Sigmoid colon (tissue), 7 donors: ENCODE measurements at regions of chr11 and their contacts with region 1.

Region 1: DNA sequence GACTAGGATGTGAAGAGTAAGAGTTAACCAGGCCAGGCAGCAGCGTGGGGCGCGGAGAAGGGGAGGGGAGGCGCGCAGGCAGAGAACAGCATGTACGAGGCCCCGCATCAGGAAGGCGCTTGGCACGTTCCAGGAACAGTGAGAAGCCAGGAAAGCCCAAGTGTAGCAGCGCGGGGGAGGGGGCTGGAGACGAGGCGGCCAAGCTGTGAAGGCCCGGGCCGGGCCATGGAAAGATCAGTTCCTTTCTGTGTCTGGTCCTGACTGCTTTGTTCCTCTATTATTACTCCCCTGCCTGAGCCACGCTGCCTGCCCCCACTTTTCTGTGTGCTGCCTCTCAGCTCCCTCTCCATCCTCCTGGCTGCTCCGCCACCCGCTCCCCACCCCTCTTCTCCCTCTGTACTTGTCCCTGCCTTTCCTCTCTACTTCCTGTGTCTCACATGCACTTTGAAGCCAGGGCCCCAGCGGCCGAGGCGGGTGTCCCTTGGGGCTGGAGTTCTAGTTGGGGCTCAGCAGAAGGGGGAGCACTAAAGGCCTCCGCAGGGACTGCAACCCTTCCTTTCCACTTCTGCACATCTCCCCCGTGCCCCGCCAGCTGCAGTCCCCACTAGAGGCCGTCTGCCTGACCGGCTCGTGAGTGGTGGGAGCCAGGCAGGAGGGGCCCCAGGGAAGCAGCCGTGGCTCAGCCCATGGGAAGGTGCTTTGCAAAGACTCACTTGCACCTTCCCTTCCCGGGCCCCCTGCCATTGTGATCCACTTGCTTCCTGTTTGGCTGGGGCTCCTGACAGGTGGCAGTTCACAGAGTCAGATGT is 63.7 kb downstream of the PRDM11 start:
- DNase-seq: peak; percentile 98
- H3K4me3 ChIP-seq: peak overlapping the region in 3 of 4 donors; percentile 7 to 29 (median 18)
- H3K27ac ChIP-seq: peak overlapping the region; percentile 87 to 95 (median 88)
- H3K4me1 ChIP-seq: peaks cover 0 to 47% (median 42%) of the 10 kb centered on the region in 4 donors
- H3K27me3 ChIP-seq: no peaks in the 10 kb centered on the region
- CTCF ChIP-seq: no peak
- EP300 ChIP-seq: peak in 3 of 4 donors; percentile 76 to 95 (median 84)
- POLR2A ChIP-seq: peak in 1 of 2 donors; percentile 44

Region 2: GRCh38 chr11:44936525-44936924 is 273.6 kb before region 1 on chr11:
- intact Hi-C with region 1: loop called (anchors 10 kb)
- DNase-seq: peak; percentile 89
- H3K4me3 ChIP-seq: no peak overlapping the region
- H3K27ac ChIP-seq: no peak overlapping the region
- H3K4me1 ChIP-seq: peaks cover 0 to 16% (median 8%) of the 10 kb centered on the region in 4 donors
- H3K27me3 ChIP-seq: no peaks in the 10 kb centered on the region
- CTCF ChIP-seq: peak; percentile 85 to 95 (median 95)
- EP300 ChIP-seq: no peak
- POLR2A ChIP-seq: no peak

Region 3: GRCh38 chr11:45147017-45147728 is 62.9 kb before region 1 on chr11:
- intact Hi-C with region 1: loop called (anchors 2 kb)
- DNase-seq: peak; percentile 98
- H3K4me3 ChIP-seq: peak overlapping the region; percentile 65 to 81 (median 74)
- H3K27ac ChIP-seq: peak overlapping the region; percentile 97 to 100 (median 99)
- H3K4me1 ChIP-seq: peaks cover 0 to 29% (median 27%) of the 10 kb centered on the region in 4 donors
- H3K27me3 ChIP-seq: no peaks in the 10 kb centered on the region
- CTCF ChIP-seq: no peak
- EP300 ChIP-seq: no peak
- POLR2A ChIP-seq: peak; percentile 30 to 38